ENCODE measurements at regions of chr4 and their contacts with region 1.

Region 1: DNA sequence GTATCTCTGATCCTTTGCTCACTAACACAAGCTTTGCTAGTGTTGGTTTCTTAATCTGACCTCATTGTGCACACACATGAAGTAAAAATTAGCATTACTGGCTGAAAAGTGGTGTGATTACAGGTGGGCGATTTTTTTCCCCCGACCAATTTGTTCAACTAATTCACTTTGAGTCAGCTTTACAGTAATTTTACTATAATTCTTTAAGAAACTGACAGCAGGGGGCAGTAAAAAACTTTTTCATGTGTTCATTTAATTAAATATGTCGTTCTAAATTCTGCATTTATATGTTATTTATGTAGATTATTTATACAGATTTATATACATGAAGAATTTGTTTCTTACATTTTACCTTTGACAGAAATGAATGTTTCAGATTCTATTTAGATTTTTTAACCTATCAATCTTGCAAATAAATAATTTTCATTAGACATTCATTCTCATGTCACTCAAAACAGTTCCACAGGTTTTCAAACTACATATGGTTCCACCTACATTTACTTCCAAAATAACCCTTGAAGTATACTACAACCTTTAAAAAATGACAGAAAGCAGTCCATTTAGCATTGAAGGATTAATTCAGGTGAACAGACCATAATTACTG is 17.5 kb downstream of the PALLD start:
- DNase-seq: peak in 3 of 14 experiments; percentile 48 to 58 (median 55)
- ATAC-seq: no peak
- H3K4me3 ChIP-seq: no peak overlapping the region
- H3K4me3 Mint-ChIP-seq: no peak overlapping the region
- H3K27ac ChIP-seq: no peak overlapping the region
- H3K27ac Mint-ChIP-seq: no peak overlapping the region
- H3K4me1 ChIP-seq: peaks cover 20% of the 10 kb centered on the region
- H3K4me1 Mint-ChIP-seq: peaks cover 35% of the 10 kb centered on the region
- H3K27me3 ChIP-seq: no peaks in the 10 kb centered on the region
- H3K27me3 Mint-ChIP-seq: no peaks in the 10 kb centered on the region
- CTCF ChIP-seq: peak; percentile 77

Region 2: DNA sequence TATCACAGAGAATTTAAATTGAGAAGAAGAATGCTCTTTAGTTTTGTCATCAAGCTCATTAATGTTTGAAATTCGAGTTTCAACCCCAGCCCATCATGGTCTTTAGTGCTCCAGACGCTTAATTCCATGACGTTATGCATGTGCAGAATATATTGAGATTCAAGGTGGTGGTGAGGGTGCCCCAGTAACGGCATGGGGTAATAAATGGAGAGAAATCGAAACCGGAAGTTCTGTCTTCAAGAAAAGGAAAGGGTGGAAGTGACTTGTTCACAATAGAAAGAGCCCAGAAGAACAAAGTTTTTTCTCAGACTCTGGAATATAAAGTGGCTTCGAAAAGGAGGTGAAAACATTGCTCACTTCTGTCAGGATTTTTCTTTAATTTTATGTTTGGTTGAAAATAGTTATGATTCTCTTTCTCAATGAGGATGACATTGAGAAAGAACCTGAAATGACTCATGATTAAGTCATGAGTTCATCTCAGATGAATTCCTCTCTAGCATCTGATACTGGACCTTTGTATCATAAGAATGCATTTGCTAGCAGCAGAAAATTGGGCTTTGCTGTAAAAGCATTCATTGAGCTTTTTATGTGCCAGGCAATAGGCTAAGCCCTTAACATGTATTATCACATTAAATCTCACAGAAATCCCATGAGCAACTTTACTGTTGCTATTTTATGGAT is 33.3 kb before region 1 on chr4:
- CTCF ChIA-PET with region 1: interaction called, 5 read pairs
- POLR2A ChIA-PET with region 1: interaction called, 16 read pairs
- intact Hi-C with region 1: loop called in 1 of 2 experiments (anchors 1 kb)
- DNase-seq: peak; percentile 12 to 87 (median 34)
- ATAC-seq: peak; percentile 68
- H3K4me3 ChIP-seq: peak overlapping the region; percentile 84
- H3K4me3 Mint-ChIP-seq: peak overlapping the region; percentile 99
- H3K27ac ChIP-seq: peak overlapping the region; percentile 78 to 86
- H3K27ac Mint-ChIP-seq: peak overlapping the region; percentile 97
- H3K4me1 ChIP-seq: peaks cover 20% of the 10 kb centered on the region
- H3K4me1 Mint-ChIP-seq: peaks cover 78% of the 10 kb centered on the region
- H3K27me3 ChIP-seq: no peaks in the 10 kb centered on the region
- H3K27me3 Mint-ChIP-seq: no peaks in the 10 kb centered on the region
- CTCF ChIP-seq: no peak

Region 3: DNA sequence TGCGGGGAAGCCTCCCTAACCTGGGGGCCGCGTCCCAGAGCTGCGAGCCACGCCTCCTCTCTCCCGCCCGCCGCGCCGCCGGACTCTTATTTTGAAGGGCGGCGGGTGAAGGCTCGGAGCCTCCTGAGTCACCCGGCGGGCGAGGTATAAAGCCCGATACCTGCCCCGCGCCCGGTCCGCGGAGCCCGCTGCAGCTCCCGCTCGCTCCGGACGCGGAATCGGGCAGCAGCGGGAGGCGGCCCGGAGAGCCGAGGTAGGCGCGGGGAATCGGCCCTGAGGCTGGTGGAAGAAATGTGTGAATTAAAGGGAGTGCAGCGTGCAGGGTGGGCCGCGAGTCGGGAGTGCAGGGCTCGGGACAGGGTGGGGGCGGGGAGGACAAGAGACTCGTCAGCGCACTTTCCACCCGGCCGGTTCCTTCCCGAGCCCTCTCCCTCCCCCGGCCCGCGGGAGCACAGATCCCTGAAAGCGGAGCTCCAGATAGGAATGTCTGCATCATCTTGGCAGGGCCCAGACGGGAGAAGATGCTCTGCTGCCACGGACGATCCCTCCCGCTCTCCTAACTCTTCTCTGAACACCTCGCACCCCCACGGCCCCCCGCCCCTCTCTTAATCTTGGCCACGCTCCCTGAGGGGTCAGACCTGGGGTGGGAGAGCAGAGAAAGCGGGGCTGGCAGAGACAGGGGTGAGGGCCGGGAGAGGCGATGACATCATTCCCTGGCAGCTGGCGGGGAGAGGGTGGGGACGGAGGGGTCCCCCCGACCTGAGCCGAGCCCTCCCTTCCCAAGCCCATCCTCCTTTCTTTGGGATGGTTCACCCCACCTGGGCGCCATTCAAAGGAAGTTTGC is 317.8 kb after region 1 on chr4:
- CTCF ChIA-PET with region 1: no interaction called
- POLR2A ChIA-PET with region 1: no interaction called
- intact Hi-C with region 1: loop called in 1 of 2 experiments (anchors 10 kb)
- DNase-seq: peak; percentile 8 to 71 (median 40)
- ATAC-seq: peak; percentile 84
- H3K4me3 ChIP-seq: peak overlapping the region; percentile 67
- H3K4me3 Mint-ChIP-seq: peak overlapping the region; percentile 83
- H3K27ac ChIP-seq: no peak overlapping the region
- H3K27ac Mint-ChIP-seq: no peak overlapping the region
- H3K4me1 ChIP-seq: peaks cover 19% of the 10 kb centered on the region
- H3K4me1 Mint-ChIP-seq: peaks cover 10% of the 10 kb centered on the region
- H3K27me3 ChIP-seq: peaks cover 36 to 56% of the 10 kb centered on the region in 2 experiments
- H3K27me3 Mint-ChIP-seq: peaks cover 68% of the 10 kb centered on the region
- CTCF ChIP-seq: no peak

Region 4: DNA sequence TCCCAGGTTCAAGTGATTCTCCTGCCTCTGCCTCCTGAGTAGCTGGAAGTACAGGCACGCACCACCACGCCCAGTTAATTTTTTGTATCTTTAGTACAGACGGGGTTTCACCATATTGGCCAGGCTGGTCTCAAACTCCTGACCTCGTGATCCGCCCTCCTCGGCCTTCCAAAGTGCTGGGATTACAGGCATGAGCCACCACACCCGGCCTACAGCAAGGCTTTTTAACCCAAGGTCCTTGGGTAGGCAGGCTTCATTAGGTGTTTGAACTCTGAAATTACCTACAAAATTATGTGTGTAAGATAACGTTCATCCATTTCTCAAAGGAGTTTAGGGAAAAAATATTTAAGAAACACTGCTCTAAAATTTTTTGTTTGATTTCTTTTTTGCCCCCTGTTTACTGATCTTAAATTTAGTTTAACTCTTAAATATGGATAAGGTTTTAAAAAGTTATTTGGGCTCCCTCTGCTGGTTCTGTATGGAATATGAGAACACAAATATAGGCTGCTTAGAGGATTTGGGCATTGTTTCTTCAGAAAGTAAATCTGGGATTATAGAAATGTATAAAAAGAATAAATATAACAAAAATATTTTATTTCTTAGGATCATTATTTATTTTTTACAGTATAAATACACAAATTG is 402.9 kb after region 1 on chr4:
- CTCF ChIA-PET with region 1: no interaction called
- POLR2A ChIA-PET with region 1: no interaction called
- intact Hi-C with region 1: loop called in 1 of 2 experiments (anchors 2 kb)
- DNase-seq: peak in 3 of 14 experiments; percentile 18 to 38 (median 20)
- ATAC-seq: no peak
- H3K4me3 ChIP-seq: no peak overlapping the region
- H3K4me3 Mint-ChIP-seq: no peak overlapping the region
- H3K27ac ChIP-seq: no peak overlapping the region
- H3K27ac Mint-ChIP-seq: no peak overlapping the region
- H3K4me1 ChIP-seq: no peaks in the 10 kb centered on the region
- H3K4me1 Mint-ChIP-seq: no peaks in the 10 kb centered on the region
- H3K27me3 ChIP-seq: no peaks in the 10 kb centered on the region
- H3K27me3 Mint-ChIP-seq: no peaks in the 10 kb centered on the region
- CTCF ChIP-seq: peak; percentile 48

Region 5: GRCh38 chr4:169485791-169486742 is 971.7 kb after region 1 on chr4:
- CTCF ChIA-PET with region 1: no interaction called
- POLR2A ChIA-PET with region 1: no interaction called
- intact Hi-C with region 1: loop called in 1 of 2 experiments (anchors 10 kb)
- DNase-seq: peak in 6 of 14 experiments; percentile 5 to 57 (median 38)
- ATAC-seq: no peak
- H3K4me3 ChIP-seq: no peak overlapping the region
- H3K4me3 Mint-ChIP-seq: no peak overlapping the region
- H3K27ac ChIP-seq: no peak overlapping the region
- H3K27ac Mint-ChIP-seq: no peak overlapping the region
- H3K4me1 ChIP-seq: no peaks in the 10 kb centered on the region
- H3K4me1 Mint-ChIP-seq: no peaks in the 10 kb centered on the region
- H3K27me3 ChIP-seq: no peaks in the 10 kb centered on the region
- H3K27me3 Mint-ChIP-seq: no peaks in the 10 kb centered on the region
- CTCF ChIP-seq: peak; percentile 62

Measured in CD4-positive, alpha-beta T cell (primary cell).